Posterior vena cava (tissue), 2 donors: ENCODE measurements at regions of chrX and their contacts with region 1.

Region 1: DNA sequence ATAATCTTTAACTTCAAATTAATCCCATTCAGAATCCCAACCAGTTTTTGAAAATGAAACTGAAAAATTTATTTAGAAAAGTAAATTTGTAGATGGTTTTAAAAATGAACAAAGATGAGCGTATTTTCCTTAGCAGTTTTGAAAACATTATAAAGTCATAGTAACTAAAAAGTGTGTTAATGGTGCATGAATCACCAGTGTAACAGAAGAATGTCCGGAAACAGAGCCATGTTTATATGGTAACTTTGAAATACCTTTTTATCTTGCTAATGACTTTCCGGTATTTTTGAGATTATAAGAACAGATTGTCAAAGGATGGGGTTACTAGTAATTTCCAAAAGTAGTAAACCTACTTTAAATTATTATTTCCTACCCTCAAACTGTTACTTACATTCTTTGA is 145.9 kb downstream of the IRS4 start:
- DNase-seq: no peak

Region 2: DNA sequence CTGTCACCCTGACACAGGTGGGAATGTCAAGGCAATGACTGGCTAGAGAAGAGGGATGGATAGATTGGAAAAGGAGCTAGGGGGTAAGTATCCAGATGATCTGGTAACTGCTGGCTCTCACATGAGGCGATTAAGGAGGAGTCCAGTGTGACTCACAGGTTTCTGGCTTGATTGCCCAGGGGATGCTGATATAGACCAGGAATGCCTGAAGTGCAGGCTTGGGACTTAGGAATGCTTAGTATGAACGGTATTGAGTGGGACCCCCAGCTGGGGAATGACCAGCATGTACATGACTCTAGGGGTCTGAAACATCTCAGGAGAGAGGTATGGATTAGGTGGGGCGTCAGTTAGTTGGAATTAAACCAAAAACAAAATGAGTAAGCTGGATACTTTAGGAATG is 1028.0 kb before region 1 on chrX:
- intact Hi-C with region 1: no loop called
- DNase-seq: no peak

Region 3: DNA sequence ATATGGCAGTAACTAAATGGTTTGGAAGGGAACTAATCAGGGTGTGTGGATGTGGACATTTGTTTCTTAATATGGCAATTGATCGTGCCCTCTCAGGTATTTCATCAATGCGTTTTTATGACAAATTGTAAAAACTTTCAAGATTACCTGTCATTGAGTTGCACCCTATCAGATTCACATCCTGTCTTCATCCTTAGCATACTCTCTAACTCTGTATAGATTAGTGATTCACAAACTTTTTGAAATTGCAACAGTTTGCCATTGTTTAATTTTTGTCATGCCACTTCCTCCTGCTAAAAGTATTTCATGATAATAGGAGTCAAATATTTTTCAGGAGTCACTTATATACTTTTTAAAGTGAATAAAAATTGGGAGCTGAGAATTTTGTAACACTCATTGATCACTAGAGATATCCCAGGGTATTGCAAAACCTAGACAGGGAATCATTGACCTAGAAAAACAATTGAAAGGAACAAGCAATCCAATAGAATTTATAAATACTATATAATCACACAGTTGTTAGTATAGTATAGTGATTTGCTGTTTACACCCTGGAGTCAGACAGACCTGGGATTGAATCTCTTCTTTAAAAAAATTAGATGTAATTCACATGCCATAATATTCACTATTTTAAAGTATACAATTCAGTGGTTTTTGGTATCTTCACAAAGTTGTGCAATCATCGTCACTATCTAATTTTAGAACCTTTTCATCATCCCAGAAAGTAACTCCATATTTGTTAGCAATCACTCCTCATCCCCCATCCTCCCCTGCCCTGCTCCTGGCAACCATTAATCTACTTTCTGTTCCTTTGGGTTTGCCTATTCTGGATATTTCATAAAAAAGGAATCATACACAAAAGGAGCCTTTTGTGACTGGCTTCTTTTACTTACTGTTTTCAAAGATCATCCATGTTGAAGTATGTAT is 756.0 kb before region 1 on chrX:
- intact Hi-C with region 1: loop called in 1 of 2 experiments (anchors 5 kb)
- DNase-seq: no peak

Region 4: GRCh38 chrX:108527724-108528123 is 62.8 kb before region 1 on chrX:
- intact Hi-C with region 1: no loop called
- DNase-seq: no peak

Region 5: GRCh38 chrX:108541286-108541685 is 49.2 kb before region 1 on chrX:
- intact Hi-C with region 1: no loop called
- DNase-seq: no peak